ENCODE measurements at regions of chr10 and their contacts with region 1.

Region 1: DNA sequence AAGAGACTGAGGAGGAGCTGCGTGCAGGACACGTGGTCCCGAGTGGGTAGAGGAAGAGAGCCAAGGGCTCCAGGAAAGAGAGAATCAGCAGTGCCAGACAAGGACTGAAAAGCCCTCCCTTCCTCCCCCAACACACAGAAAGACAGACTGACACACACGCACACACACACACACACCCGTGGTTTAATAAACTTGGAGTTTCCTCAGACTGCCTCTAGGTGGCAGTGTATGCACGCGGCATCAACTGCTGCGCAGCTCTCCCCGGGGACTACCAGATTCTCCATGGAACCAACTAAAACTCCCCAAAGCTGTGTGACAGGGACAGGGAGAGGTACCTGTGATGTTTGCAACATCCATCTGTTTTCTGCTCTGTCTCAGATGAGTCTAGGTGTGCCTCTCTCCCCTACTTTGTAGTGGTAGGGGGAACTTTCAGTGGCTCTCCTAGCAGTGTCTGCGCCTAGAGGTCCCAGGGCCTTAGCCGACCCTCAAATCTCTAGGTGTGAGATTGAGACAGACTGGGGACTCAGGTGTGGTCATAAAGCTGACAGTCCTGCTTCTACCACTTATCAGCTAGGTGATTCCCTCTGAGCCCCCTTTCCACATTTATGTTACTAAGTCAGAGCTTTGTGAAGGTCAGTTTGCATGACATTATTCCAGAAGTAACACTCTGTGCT is 9.3 kb upstream of the TSPAN14 start:
- DNase-seq: peak; percentile 63
- ATAC-seq: peak; percentile 89
- H3K4me3 ChIP-seq: no peak overlapping the region
- H3K27ac ChIP-seq: no peak overlapping the region
- H3K4me1 ChIP-seq: peaks cover 17% of the 10 kb centered on the region
- H3K27me3 ChIP-seq: no peaks in the 10 kb centered on the region
- CTCF ChIP-seq: peak; percentile 90 to 99 (median 93)
- EP300 ChIP-seq: no peak
- POLR2A ChIP-seq: no peak
- RAD21 ChIP-seq: peak; percentile 100

Region 2: DNA sequence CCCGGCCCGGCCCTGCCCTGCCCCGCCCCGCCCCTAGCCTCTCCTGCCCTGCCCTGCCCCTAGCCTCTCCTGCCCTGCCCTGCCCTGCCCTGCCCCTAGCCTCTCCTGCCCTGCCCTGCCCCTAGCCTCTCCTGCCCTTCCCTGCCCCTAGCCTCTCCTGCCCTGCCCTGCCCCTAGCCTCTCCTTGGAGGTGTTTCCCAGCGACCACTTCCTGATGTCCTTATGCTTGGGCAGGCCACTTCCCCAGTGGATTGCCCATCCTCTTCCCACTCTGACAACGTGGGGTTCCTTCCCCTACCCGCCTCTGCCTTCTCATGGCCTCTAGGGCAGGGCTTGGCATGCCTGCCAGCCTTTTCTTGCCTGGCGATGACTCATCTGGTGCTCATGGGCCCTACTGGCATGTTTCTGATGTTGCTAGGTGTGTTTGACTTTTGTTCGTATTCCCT is 15.2 kb before region 1 on chr10:
- CTCF ChIA-PET with region 1: interaction called, 27 read pairs
- POLR2A ChIA-PET with region 1: interaction called, 10 read pairs
- RAD21 ChIA-PET with region 1: no interaction called
- SMC1A ChIA-PET with region 1: interaction called, 9 read pairs
- in situ Hi-C with region 1: no loop called
- intact Hi-C with region 1: no loop called
- DNase-seq: no peak
- ATAC-seq: no peak; the same call in 2 of the 3 replicates
- H3K4me3 ChIP-seq: no peak overlapping the region
- H3K27ac ChIP-seq: no peak overlapping the region
- H3K4me1 ChIP-seq: no peaks in the 10 kb centered on the region
- H3K27me3 ChIP-seq: no peaks in the 10 kb centered on the region
- CTCF ChIP-seq: no peak
- EP300 ChIP-seq: no peak
- POLR2A ChIP-seq: no peak
- RAD21 ChIP-seq: no peak

Region 3: GRCh38 chr10:80493522-80494051 is 48.8 kb after region 1 on chr10:
- CTCF ChIA-PET with region 1: interaction called, 852 read pairs
- POLR2A ChIA-PET with region 1: no interaction called
- RAD21 ChIA-PET with region 1: interaction called, 432 read pairs
- SMC1A ChIA-PET with region 1: interaction called, 1,038 read pairs
- in situ Hi-C with region 1: no loop called
- intact Hi-C with region 1: no loop called
- DNase-seq: no peak
- ATAC-seq: peak; percentile 75
- H3K4me3 ChIP-seq: peak overlapping the region; percentile 15; the same call in 1 of the 2 replicates
- H3K27ac ChIP-seq: peak overlapping the region; percentile 47
- H3K4me1 ChIP-seq: peaks cover 26% of the 10 kb centered on the region
- H3K27me3 ChIP-seq: no peaks in the 10 kb centered on the region
- CTCF ChIP-seq: no peak
- EP300 ChIP-seq: no peak
- POLR2A ChIP-seq: no peak
- RAD21 ChIP-seq: no peak

Region 4: DNA sequence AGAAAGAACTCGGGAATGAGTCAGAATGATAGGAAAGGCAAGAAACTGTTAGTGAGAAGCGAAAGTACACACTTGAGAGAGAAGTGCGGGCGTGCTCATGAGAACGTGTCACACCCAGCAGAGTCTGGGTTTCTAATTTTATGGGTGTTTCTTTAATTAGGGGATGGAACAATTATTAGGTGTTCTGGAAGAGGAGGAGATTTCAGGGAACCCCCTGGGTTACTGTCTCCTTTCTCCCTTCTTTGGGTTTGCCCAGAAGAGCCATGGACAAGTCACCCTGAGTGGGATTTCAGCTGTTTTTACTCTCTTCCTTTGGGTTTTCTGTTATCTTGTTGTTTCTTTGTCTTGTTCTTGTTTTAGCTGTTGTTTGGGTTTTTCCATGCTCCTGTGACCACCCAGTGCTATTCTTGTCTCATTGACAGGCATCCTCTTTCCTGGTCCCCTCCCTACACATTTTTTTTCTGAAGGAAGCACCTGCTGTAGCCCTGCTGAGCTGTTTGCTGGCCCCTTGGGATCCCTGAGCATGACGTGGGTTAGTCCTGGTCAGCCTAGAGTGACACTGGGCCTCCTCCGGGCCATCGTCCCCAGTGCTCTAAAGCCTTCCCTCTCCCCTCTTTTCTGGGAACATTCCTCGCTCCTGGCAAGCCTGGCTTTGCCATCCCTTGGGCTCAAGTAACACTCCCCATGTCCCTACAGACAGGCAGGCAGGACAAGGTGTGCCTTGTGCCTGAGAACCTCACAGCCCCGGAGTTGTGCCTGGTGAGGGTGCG is 96.4 kb after region 1 on chr10:
- CTCF ChIA-PET with region 1: interaction called, 12 read pairs
- POLR2A ChIA-PET with region 1: no interaction called
- RAD21 ChIA-PET with region 1: interaction called, 4 read pairs
- SMC1A ChIA-PET with region 1: interaction called, 6 read pairs
- in situ Hi-C with region 1: no loop called
- intact Hi-C with region 1: no loop called
- DNase-seq: peak; percentile 60
- ATAC-seq: peak; percentile 68
- H3K4me3 ChIP-seq: no peak overlapping the region; the same call in 1 of the 2 replicates
- H3K27ac ChIP-seq: peak overlapping the region; percentile 82
- H3K4me1 ChIP-seq: peaks cover 28% of the 10 kb centered on the region
- H3K27me3 ChIP-seq: no peaks in the 10 kb centered on the region
- CTCF ChIP-seq: no peak
- EP300 ChIP-seq: peak in 1 of 2 experiments; percentile 41; a peak in 1 of 4 replicates
- POLR2A ChIP-seq: no peak
- RAD21 ChIP-seq: no peak

Region 5: DNA sequence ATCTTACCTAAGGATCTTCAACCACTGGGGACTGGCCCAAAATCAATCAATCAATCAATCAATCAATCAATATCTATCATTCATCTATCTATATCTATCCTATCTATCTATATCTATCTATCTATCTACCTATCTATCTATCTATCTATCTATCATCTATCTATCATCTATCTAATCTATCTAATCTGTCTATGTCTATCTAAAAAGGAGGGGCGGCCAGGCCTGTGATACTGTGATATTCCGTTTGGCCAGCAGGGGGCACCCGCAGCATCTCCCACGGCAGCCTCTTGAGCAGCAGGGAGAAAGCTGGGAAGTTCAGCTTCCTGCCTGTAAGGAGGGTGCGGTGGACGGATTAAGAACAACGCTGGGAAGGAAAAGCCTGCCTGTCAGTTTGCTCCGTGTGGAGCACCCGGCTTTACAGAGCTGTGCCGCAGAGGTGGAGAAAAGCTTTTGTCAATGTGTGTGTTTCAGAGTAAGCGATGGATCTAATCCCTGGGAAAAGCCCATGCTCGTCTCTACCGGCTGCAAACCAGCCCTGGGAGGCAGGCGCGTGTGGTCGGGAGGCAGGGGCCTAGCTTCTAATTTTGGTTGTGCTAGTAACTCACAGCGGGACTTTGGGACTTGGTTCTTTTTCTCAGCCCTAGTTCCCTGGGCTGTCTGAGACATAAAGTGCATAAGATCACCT is 217.9 kb after region 1 on chr10:
- CTCF ChIA-PET with region 1: interaction called, 44 read pairs
- POLR2A ChIA-PET with region 1: no interaction called
- RAD21 ChIA-PET with region 1: interaction called, 11 read pairs
- SMC1A ChIA-PET with region 1: interaction called, 25 read pairs
- in situ Hi-C with region 1: no loop called
- intact Hi-C with region 1: loop called (anchors 1 kb)
- DNase-seq: peak; percentile 15
- ATAC-seq: peak; percentile 86
- H3K4me3 ChIP-seq: peak overlapping the region; percentile 6; the same call in 1 of the 2 replicates
- H3K27ac ChIP-seq: no peak overlapping the region
- H3K4me1 ChIP-seq: no peaks in the 10 kb centered on the region
- H3K27me3 ChIP-seq: no peaks in the 10 kb centered on the region
- CTCF ChIP-seq: peak; percentile 72 to 83 (median 82)
- EP300 ChIP-seq: no peak
- POLR2A ChIP-seq: no peak
- RAD21 ChIP-seq: peak; percentile 64

Region 6: DNA sequence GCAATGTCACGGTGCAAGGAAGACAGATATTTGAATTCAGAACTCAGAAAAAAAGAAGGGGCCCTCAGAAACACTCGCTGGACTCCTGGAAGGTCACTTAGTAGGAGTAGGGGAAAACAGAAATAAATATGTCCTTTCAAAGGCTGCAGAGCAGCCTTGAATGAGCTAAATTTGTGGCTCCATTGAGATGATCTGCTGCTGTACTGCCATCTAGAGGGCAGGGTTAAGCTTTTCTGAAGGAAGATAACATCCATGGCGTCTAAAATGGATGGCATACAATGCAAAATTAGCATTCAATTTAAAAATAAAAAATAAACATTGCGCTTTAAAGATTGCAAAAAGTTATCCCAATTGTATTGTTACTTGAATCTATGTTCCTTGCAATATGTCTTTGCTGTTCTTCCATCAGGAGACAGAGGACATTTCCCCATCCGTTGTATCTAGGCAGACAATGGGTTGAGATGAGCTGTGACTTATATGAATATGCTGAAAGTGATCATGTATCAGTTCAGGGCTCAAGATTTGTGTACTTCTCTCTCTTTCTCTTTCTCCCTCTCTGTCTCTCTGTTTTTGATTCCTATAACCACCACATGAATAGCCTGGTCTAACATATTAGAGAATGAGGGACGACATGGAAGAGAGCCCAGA is 735.1 kb after region 1 on chr10:
- CTCF ChIA-PET with region 1: interaction called, 10 read pairs
- POLR2A ChIA-PET with region 1: no interaction called
- RAD21 ChIA-PET with region 1: no interaction called
- SMC1A ChIA-PET with region 1: interaction called, 7 read pairs
- in situ Hi-C with region 1: no loop called
- intact Hi-C with region 1: no loop called
- DNase-seq: peak; percentile 16
- ATAC-seq: peak; percentile 98
- H3K4me3 ChIP-seq: no peak overlapping the region
- H3K27ac ChIP-seq: no peak overlapping the region
- H3K4me1 ChIP-seq: no peaks in the 10 kb centered on the region
- H3K27me3 ChIP-seq: no peaks in the 10 kb centered on the region
- CTCF ChIP-seq: peak; percentile 53 to 71 (median 54); a peak in 5 of 6 replicates
- EP300 ChIP-seq: no peak
- POLR2A ChIP-seq: no peak
- RAD21 ChIP-seq: peak; percentile 88